HEK293 (cell line): ENCODE measurements at regions of chr19 and their contacts with region 1.

Region 1: DNA sequence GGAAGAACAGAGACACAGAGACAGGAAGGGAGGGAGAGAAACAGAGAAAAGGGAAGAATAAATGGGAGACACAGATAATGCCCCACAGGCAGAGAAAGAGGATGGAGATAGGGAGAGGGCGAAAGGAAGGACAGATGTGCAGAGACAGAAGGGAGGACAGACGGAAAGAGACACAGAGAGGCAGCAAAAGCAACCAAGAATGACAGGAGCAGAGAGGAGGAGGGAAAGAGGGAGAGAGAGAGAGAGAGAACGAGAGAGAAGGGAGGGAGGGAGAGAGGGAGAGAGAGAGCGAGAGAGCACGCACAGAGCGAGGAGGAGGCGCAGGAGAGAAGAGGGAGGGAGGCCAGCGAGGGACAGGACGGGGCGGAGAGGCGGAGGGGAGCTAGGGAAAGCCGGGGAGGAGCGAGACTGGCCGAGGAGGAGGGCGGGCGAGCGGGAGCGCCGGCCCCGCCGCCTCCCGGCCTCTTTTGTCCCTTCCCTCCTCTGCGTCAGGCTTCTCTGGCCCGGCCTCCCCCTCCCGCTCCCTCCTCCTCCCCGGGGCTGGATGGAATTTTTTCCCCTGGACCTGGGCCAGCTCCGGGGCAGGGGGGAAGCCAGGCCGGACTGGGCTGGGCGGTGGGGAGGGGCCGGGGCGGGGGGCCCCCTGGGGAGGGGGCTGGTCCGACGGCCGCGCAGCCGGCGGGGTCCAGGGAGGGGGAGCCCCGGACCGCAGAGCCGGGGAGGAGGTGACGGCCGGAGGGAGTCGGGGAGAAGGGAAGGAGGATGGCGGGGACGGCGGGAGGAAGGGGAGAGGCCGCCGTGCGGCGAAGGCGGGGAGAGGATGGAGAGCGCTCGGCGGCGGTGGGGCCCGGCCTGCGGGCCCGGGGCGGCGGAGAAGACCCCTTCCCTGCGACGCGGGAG is 4.2 kb upstream of the SPACA6 start:
- H3K4me3 ChIP-seq: peak overlapping the region; percentile 83
- H3K27ac ChIP-seq: peak overlapping the region; percentile 91
- H3K4me1 ChIP-seq: peaks cover 17% of the 10 kb centered on the region
- CTCF ChIP-seq: peak; percentile 65; the same call in 1 of the 2 replicates

Region 2: DNA sequence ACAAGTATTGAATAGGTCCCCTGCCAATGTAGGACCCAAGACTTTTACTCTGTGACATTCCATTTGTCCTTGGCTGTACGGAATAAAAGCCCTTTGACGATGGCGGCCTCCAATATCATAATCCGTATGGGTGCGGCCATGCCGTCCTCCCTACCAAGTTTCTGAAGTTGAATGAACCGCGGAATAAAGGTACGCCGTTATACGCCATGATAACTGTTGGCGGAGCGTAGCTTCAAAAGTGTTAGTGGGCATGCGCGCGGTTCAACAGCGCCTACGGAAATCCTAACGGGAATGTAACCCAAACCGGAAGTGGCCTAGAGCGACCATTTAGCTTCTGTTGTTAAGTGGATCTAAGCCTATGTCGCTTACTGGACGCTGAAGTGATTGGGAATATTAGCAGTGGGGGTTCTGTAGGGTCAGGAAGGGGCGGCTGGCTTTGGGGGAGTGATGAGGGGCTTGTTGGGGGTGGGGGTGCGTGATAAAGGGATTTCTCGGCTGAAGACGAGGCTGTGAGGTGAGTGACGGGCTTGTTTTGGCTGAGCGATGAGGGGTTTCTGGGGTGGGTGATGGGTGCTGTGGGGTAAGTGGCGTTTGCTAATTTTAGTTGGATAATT is 117.9 kb before region 1 on chr19 and contains the start of gene ZNF175:
- CTCF ChIA-PET with region 1: no interaction called
- POLR2A ChIA-PET with region 1: interaction called, 12 read pairs
- H3K4me3 ChIP-seq: peak within 1 kb of the TSS; percentile 92
- H3K27ac ChIP-seq: no peak within 1 kb of the TSS
- H3K4me1 ChIP-seq: no peaks in the 10 kb centered on the region
- CTCF ChIP-seq: no peak

Region 3: GRCh38 chr19:51703575-51704515 is 14.9 kb after region 1 on chr19:
- CTCF ChIA-PET with region 1: interaction called, 3 read pairs
- POLR2A ChIA-PET with region 1: interaction called, 30 read pairs
- H3K4me3 ChIP-seq: peak overlapping the region; percentile 43
- H3K27ac ChIP-seq: peak overlapping the region; percentile 70
- H3K4me1 ChIP-seq: peaks cover 3% of the 10 kb centered on the region; the same call in 1 of the 2 replicates
- CTCF ChIP-seq: peak; percentile 86

Region 4: DNA sequence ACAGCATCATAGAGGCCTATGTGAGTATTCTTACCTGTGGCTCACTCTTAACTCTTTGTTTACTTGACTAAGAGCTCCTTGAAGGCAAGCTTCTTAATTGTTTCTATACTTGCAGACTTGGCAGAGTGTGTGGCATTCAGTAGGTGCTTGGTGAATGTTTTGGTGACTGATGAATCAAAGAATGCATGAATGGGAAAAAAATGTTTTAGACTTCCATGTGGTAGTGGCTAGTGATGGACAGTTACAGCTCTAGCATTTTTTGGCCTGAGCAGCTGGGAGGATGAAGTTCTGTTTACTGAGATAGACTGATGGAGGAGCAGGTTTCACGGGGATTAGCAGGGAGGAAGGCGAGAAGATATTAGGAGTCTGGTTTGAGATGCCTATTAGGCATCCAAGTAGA is 21.2 kb after region 1 on chr19:
- CTCF ChIA-PET with region 1: no interaction called
- POLR2A ChIA-PET with region 1: interaction called, 22 read pairs
- H3K4me3 ChIP-seq: no peak overlapping the region
- H3K27ac ChIP-seq: no peak overlapping the region
- H3K4me1 ChIP-seq: no peaks in the 10 kb centered on the region
- CTCF ChIP-seq: no peak